SK-N-SH (cell line): ENCODE measurements at regions of chr2 and their contacts with region 1.

Region 1: DNA sequence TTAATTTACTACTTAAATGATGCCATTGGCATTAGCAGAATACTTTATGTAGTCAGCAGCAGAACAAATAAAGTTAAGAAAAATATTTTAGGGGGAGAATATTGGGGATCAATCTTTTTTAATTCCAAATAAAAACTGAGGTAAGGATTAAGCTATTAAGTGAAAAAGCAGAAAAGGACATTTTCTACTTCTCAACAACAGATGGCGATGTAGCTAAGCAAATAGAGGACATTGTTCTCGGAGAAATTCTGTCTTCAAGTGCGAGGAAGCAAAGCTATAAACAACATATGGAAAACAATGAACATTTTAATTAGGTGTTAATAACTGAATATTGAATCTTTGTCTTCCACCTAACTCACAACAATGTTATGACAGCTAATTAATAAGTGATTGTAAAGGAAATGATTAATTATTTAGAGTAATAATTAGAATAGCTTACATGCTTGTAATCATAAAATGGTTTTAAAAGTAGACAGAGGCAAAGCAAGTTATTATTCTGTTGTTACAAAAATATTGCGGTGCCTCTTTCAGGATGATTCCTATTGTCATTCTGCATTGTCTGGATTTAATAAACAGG is 32.9 kb upstream of the CCDC93 start:
- DNase-seq: peak; percentile 23
- H3K4me3 ChIP-seq: peak overlapping the region in 1 of 2 experiments; percentile 2; a peak in 1 of 4 replicates
- H3K27ac ChIP-seq: no peak overlapping the region
- H3K4me1 ChIP-seq: peaks cover 0 to 8% of the 10 kb centered on the region in 2 experiments; a peak in 1 of 4 replicates
- H3K27me3 ChIP-seq: no peaks in the 10 kb centered on the region; the same call in 1 of the 2 replicates
- CTCF ChIP-seq: peak; percentile 72
- EP300 ChIP-seq: no peak
- RAD21 ChIP-seq: peak; percentile 88

Region 2: DNA sequence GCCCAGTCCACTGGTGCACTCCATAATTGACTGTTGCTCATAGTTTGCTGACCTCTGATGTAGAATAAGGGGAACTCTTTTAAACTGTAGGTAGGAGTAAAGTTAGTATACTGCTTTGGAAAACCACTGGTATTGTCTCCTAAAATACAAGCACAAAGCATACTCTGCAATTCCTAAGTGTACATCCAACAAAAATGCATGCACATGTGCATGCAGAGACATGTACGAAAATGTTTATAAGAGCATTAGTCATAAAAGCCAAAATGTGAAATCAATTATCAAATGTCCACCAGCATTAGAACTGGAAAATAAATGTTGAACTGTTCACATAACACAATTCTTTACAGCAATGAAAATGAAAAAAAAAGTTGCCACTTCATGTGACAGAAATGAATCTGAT is 272.0 kb before region 1 on chr2:
- CTCF ChIA-PET with region 1: no interaction called
- POLR2A ChIA-PET with region 1: no interaction called
- DNase-seq: no peak
- H3K4me3 ChIP-seq: no peak overlapping the region
- H3K27ac ChIP-seq: no peak overlapping the region
- H3K4me1 ChIP-seq: peaks cover 0 to 12% of the 10 kb centered on the region in 2 experiments; a peak in 2 of 4 replicates
- H3K27me3 ChIP-seq: no peaks in the 10 kb centered on the region
- CTCF ChIP-seq: no peak
- EP300 ChIP-seq: no peak
- RAD21 ChIP-seq: no peak

Region 3: DNA sequence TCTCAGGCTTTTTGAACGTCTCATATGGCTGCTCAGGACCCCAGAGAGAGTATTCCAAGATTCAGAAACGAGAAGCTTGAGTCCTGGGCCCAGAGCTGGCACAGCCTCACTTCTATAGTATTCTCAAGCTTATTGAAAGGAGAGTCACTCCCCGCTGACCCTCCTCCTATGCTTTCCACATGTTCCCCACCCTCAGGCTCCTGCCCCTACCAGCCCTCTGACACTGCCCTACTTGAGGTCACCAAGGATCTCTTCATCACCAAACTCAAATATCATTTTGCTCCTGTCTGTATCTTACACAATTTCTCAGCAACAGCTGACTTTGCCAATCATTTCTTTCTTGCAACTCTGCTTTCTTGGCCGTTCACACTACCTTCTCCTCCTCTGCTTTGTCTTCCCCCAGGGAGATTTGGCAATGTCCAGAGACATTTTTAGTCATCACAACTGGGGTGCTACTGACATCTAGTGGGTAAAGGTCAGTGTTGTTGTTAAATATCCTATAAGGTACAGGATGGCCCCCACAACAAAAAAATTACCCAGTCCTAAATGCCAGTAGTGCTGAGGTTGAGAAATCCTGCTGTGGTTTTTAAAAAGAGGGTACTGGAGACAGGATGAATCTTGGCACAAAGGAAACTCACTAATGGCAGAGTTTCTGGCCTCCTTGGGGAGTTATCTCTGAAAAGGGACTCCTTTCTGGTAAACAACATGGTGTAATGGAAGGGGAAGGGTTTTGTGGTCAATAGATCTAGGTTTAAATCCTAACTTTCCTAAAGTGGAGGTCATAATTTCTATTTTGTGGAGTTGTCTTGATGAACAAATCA is 14.6 kb after region 1 on chr2:
- CTCF ChIA-PET with region 1: interaction called, 32 read pairs
- POLR2A ChIA-PET with region 1: no interaction called
- DNase-seq: peak; percentile 2
- H3K4me3 ChIP-seq: no peak overlapping the region
- H3K27ac ChIP-seq: no peak overlapping the region
- H3K4me1 ChIP-seq: no peaks in the 10 kb centered on the region; a peak in 1 of 4 replicates
- H3K27me3 ChIP-seq: peaks cover 5% of the 10 kb centered on the region; the same call in 1 of the 2 replicates
- CTCF ChIP-seq: peak; percentile 51
- EP300 ChIP-seq: no peak
- RAD21 ChIP-seq: peak; percentile 59

Region 4: DNA sequence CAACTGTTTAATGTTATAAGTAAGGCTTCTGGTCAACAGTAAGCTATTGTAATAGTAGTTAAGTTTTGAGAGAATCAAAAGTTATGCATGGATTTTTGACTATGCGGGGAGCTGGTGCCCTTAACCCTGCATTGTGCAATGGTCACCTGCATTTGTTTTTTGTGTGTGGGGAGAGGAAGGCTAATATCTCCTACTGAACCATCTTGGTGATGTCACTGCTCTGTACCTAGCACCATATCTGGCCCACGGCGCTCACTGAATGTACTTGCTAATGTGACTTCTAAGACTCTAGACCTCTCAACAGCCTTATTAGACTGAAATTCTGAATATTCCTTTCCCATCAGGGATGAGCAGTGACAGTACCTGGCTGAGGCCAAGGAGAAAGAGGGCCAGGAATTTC is 26.6 kb after region 1 on chr2:
- CTCF ChIA-PET with region 1: interaction called, 15 read pairs
- POLR2A ChIA-PET with region 1: no interaction called
- DNase-seq: no peak
- H3K4me3 ChIP-seq: no peak overlapping the region
- H3K27ac ChIP-seq: no peak overlapping the region
- H3K4me1 ChIP-seq: no peaks in the 10 kb centered on the region
- H3K27me3 ChIP-seq: no peaks in the 10 kb centered on the region; the same call in 1 of the 2 replicates
- CTCF ChIP-seq: no peak
- EP300 ChIP-seq: no peak
- RAD21 ChIP-seq: no peak

Region 5: GRCh38 chr2:118103951-118104940 is 57.5 kb after region 1 on chr2:
- CTCF ChIA-PET with region 1: no interaction called
- POLR2A ChIA-PET with region 1: no interaction called
- DNase-seq: no peak
- H3K4me3 ChIP-seq: no peak overlapping the region
- H3K27ac ChIP-seq: no peak overlapping the region
- H3K4me1 ChIP-seq: peaks cover 0 to 2% of the 10 kb centered on the region in 2 experiments; a peak in 1 of 4 replicates
- H3K27me3 ChIP-seq: no peaks in the 10 kb centered on the region
- CTCF ChIP-seq: no peak
- EP300 ChIP-seq: no peak
- RAD21 ChIP-seq: no peak

Region 6: DNA sequence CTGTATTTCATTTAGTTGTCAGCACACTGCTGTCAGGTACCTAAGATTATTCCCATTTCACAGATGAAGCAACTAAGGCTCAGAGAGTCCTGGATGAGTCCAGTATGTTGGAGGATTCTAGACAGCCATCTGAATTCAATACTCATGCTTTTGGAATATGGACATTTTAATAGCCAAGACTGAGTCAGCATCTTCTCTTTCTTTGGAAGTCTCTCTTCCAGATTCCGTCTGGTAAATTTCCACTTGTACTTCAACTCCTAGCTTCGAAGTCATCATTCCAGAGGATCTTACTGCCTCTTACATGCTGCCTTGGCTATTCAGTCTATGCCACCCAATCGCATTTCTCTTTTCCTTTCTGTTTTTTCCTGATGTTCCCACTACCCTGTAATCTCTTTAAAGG is 82.1 kb after region 1 on chr2:
- CTCF ChIA-PET with region 1: no interaction called
- POLR2A ChIA-PET with region 1: no interaction called
- DNase-seq: no peak
- H3K4me3 ChIP-seq: no peak overlapping the region
- H3K27ac ChIP-seq: no peak overlapping the region
- H3K4me1 ChIP-seq: no peaks in the 10 kb centered on the region
- H3K27me3 ChIP-seq: no peaks in the 10 kb centered on the region
- CTCF ChIP-seq: no peak
- EP300 ChIP-seq: no peak
- RAD21 ChIP-seq: no peak